ENCODE measurements at regions of chr1 and their contacts with region 1.

Region 1: GRCh38 chr1:178344513-178345082 is 152.2 kb downstream of the CLEC20A start:
- DNase-seq: peak; percentile 94
- H3K4me3 Mint-ChIP-seq: peak overlapping the region; percentile 46
- H3K27ac Mint-ChIP-seq: peak overlapping the region; percentile 90
- H3K4me1 Mint-ChIP-seq: peaks cover 42% of the 10 kb centered on the region
- H3K27me3 Mint-ChIP-seq: no peaks in the 10 kb centered on the region
- CTCF ChIP-seq: peak; percentile 75

Region 2: DNA sequence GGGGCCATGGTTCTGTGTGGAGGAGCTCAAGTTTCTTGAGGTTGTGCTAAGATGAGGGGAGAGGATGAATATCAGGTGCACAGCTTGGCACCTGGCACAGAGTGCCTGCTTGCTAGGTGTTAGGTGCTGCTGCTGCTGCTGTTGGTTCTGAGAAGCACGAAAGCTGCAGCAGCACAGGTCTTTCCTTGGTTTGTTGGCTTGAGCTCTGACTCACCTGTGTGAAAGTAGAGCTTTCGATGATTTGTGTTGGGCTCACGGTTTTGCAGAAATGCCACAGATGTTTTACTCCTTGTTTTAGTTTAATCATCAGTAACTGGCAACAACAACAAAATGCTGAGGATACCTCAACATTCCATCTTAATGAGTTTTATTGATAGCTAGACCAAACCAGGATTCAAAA is 952.3 kb before region 1 on chr1:
- CTCF ChIA-PET with region 1: no interaction called
- POLR2A ChIA-PET with region 1: no interaction called
- intact Hi-C with region 1: no loop called
- DNase-seq: peak; percentile 14
- H3K4me3 Mint-ChIP-seq: no peak overlapping the region
- H3K27ac Mint-ChIP-seq: no peak overlapping the region
- H3K4me1 Mint-ChIP-seq: peaks cover 6% of the 10 kb centered on the region
- H3K27me3 Mint-ChIP-seq: no peaks in the 10 kb centered on the region
- CTCF ChIP-seq: no peak

Region 3: DNA sequence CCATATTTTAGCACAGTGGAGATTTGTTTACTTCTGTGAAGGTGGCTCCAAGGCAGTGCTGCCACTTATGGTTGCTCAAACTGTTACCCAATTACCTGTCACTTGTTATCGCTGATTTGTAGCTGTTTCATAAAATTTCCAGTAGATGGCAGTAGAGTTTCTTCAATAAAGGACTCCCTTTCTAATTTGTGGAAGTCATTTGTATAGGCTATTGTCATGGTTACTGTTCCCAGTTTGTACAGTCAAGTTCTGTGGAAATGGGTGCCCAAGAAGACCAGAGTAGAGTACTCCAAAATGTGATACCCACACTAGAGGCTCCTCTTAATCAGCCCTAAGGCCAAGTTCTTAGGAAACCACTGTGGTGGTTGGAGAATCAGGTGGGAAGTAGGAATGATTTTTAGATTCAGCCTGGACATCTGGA is 33.9 kb before region 1 on chr1:
- CTCF ChIA-PET with region 1: interaction called, 90 read pairs
- POLR2A ChIA-PET with region 1: interaction called, 14 read pairs
- intact Hi-C with region 1: loop called (anchors 2 kb)
- DNase-seq: peak; percentile 84
- H3K4me3 Mint-ChIP-seq: no peak overlapping the region
- H3K27ac Mint-ChIP-seq: peak overlapping the region; percentile 77
- H3K4me1 Mint-ChIP-seq: peaks cover 15% of the 10 kb centered on the region
- H3K27me3 Mint-ChIP-seq: no peaks in the 10 kb centered on the region
- CTCF ChIP-seq: peak; percentile 82

Region 4: GRCh38 chr1:178324003-178324402 is 20.6 kb before region 1 on chr1:
- CTCF ChIA-PET with region 1: interaction called, 15 read pairs
- POLR2A ChIA-PET with region 1: interaction called, 17 read pairs
- intact Hi-C with region 1: no loop called
- DNase-seq: peak; percentile 44
- H3K4me3 Mint-ChIP-seq: no peak overlapping the region
- H3K27ac Mint-ChIP-seq: no peak overlapping the region
- H3K4me1 Mint-ChIP-seq: peaks cover 19% of the 10 kb centered on the region
- H3K27me3 Mint-ChIP-seq: no peaks in the 10 kb centered on the region
- CTCF ChIP-seq: no peak

Region 5: DNA sequence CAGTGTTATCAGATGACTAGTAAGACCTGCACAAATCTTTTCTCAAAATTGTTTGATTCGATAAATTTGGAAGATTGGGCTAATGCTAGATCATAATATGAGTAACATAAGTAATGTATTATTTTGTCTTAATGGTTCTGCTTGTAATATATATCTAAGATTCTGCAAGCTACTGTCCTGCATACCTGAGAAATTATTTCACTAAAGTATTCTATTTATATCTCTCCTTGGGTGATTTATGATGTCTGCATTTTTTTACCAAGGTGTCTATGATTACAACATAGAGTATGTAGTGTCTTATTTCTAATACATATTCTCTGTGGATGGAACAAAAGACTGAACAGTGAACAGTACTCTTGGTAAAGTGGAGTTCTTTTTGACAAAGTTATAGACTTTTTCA is 14.4 kb before region 1 on chr1:
- CTCF ChIA-PET with region 1: interaction called, 15 read pairs
- POLR2A ChIA-PET with region 1: interaction called, 18 read pairs
- intact Hi-C with region 1: no loop called
- DNase-seq: peak; percentile 38
- H3K4me3 Mint-ChIP-seq: no peak overlapping the region
- H3K27ac Mint-ChIP-seq: peak overlapping the region; percentile 9
- H3K4me1 Mint-ChIP-seq: peaks cover 26% of the 10 kb centered on the region
- H3K27me3 Mint-ChIP-seq: no peaks in the 10 kb centered on the region
- CTCF ChIP-seq: no peak

Region 6: DNA sequence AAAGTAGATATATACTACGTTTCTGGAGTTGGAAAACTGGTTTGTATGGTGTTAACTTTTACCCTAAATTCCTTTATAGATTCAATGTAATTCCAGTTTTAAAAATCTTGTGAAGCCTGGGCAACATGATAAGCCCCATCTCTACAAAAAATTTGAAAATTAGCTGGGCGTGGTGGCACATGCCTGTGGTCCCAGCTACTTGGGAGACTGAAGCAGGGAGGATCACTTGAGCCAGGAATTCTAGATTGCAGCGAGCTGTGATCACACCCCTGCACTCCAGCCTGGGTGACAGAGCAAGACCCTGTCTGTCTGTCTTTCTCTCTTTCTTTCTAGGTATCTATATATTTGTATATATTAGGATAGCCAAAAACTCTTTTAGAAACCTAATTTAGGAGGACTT is 10.2 kb after region 1 on chr1:
- CTCF ChIA-PET with region 1: interaction called, 16 read pairs
- POLR2A ChIA-PET with region 1: interaction called, 12 read pairs
- intact Hi-C with region 1: no loop called
- DNase-seq: no peak
- H3K4me3 Mint-ChIP-seq: no peak overlapping the region
- H3K27ac Mint-ChIP-seq: no peak overlapping the region
- H3K4me1 Mint-ChIP-seq: peaks cover 13% of the 10 kb centered on the region
- H3K27me3 Mint-ChIP-seq: no peaks in the 10 kb centered on the region
- CTCF ChIP-seq: no peak

Region 7: DNA sequence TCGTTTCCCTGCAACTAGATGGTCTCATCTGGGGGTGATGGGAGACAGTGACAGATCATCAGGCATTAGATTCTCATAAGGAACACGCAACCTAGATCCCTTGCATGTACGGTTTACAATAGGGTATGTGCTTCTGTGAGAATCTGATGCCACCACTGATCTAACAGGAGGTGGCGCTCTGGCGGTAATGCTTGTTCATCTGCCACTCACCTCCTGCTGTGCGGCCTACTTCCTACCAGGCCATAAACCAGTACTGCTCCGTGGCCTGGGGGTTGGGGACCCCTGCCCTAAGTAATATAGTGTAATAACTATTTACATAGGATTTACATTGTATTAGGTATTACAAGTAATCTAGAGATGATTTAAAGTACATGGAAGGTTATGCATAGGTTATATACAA is 17.2 kb after region 1 on chr1:
- CTCF ChIA-PET with region 1: interaction called, 6 read pairs
- POLR2A ChIA-PET with region 1: interaction called, 11 read pairs
- intact Hi-C with region 1: no loop called
- DNase-seq: peak; percentile 28
- H3K4me3 Mint-ChIP-seq: no peak overlapping the region
- H3K27ac Mint-ChIP-seq: no peak overlapping the region
- H3K4me1 Mint-ChIP-seq: peaks cover 15% of the 10 kb centered on the region
- H3K27me3 Mint-ChIP-seq: no peaks in the 10 kb centered on the region
- CTCF ChIP-seq: no peak

Region 8: GRCh38 chr1:178371235-178371634 is 26.6 kb after region 1 on chr1:
- CTCF ChIA-PET with region 1: interaction called, 5 read pairs
- POLR2A ChIA-PET with region 1: interaction called, 11 read pairs
- intact Hi-C with region 1: no loop called
- DNase-seq: no peak
- H3K4me3 Mint-ChIP-seq: no peak overlapping the region
- H3K27ac Mint-ChIP-seq: no peak overlapping the region
- H3K4me1 Mint-ChIP-seq: no peaks in the 10 kb centered on the region
- H3K27me3 Mint-ChIP-seq: no peaks in the 10 kb centered on the region
- CTCF ChIP-seq: no peak